ENCODE measurements at regions of chr19 and their contacts with region 1.

Region 1: DNA sequence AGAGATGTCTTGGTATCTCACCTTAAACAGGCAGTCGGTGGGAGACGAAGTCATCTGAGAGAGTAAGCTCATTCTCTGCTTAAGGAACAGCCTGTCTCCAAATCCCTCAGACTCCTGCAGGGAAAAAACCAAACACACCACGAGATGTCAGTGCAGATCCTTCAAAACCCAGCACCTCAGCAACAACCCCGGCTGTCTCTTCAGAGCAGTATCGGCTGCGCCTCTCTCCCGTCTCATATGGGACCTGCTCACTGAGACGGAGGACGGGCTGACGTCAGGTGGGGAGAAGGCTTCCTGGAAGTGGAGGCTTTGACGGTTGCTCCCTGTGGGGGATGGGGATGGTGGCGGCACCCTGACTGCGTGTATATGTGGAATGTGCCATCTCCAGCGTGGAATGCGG is 43.6 kb downstream of the ANKRD27 start:
- DNase-seq: no peak
- H3K4me3 ChIP-seq: no peak overlapping the region
- H3K27ac ChIP-seq: no peak overlapping the region
- H3K4me1 ChIP-seq: no peaks in the 10 kb centered on the region
- H3K27me3 ChIP-seq: no peaks in the 10 kb centered on the region
- CTCF ChIP-seq: no peak
- EP300 ChIP-seq: no peak
- POLR2A ChIP-seq: no peak
- RAD21 ChIP-seq: no peak

Region 2: GRCh38 chr19:32652894-32653602 is 21.7 kb after region 1 on chr19:
- CTCF ChIA-PET with region 1: interaction called, 15 read pairs
- POLR2A ChIA-PET with region 1: no interaction called
- DNase-seq: no peak
- H3K4me3 ChIP-seq: no peak overlapping the region
- H3K27ac ChIP-seq: no peak overlapping the region
- H3K4me1 ChIP-seq: peaks cover 0 to 6% (median 3%) of the 10 kb centered on the region in 4 experiments; a peak in 3 of 7 replicates
- H3K27me3 ChIP-seq: no peaks in the 10 kb centered on the region
- CTCF ChIP-seq: no peak
- EP300 ChIP-seq: no peak
- POLR2A ChIP-seq: no peak
- RAD21 ChIP-seq: no peak

Region 3: GRCh38 chr19:32708457-32708856 is 77.1 kb after region 1 on chr19:
- CTCF ChIA-PET with region 1: no interaction called
- POLR2A ChIA-PET with region 1: no interaction called
- DNase-seq: no peak
- H3K4me3 ChIP-seq: no peak overlapping the region
- H3K27ac ChIP-seq: no peak overlapping the region
- H3K4me1 ChIP-seq: no peaks in the 10 kb centered on the region
- H3K27me3 ChIP-seq: no peaks in the 10 kb centered on the region
- CTCF ChIP-seq: no peak
- EP300 ChIP-seq: no peak
- POLR2A ChIP-seq: no peak
- RAD21 ChIP-seq: no peak